CD4-positive, alpha-beta T cell (primary cell): ENCODE measurements at regions of chr2 and their contacts with region 1.

Region 1: DNA sequence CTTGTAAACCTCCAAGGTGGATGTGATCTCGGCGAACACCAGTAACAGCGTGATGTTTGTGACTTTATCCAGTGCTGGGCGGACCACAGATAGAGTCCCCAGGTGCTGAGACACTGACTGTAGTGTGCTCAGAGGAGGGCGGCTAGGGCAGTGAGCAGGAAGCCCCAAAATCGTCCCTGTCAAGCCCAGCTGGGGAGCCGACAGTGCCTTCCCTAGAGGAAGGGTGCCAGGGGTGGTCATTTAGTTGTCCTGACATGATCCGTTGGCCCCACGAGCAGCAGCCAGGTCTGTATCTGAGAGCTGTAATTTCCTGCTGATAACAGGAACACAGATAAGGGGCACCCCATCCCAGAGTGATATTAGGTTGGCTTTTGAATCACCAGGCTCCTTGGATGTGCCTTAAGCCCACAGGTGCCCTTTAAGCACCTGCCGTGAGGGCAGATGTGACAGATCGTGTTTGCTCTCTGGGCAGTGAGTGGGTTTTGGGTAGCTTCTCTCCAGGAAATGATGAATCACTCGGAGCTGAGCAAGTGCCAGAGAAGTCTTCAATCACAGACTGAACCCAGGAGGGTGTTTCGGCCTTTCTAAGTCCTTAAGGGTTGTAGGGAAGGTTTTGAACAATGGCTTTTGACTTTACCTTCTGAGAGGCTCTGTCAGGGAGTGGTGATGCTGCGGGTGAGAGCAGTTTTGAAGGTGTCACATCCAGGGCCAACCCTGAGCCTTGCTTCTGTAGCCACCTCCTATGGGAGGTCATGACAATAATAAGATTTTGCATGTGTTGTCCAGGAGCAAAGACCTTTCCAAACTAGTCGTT is 7.7 kb downstream of the LPIN1 start:
- DNase-seq: peak; percentile 44 to 86 (median 60)
- ATAC-seq: peak; percentile 47
- H3K4me3 ChIP-seq: peak overlapping the region; percentile 37
- H3K4me3 Mint-ChIP-seq: peak overlapping the region; percentile 80
- H3K27ac ChIP-seq: peak overlapping the region; percentile 80 to 94
- H3K27ac Mint-ChIP-seq: peak overlapping the region; percentile 92
- H3K4me1 ChIP-seq: peaks cover 71% of the 10 kb centered on the region
- H3K4me1 Mint-ChIP-seq: peaks cover 86% of the 10 kb centered on the region
- H3K27me3 ChIP-seq: no peaks in the 10 kb centered on the region
- H3K27me3 Mint-ChIP-seq: no peaks in the 10 kb centered on the region
- CTCF ChIP-seq: no peak

Region 2: GRCh38 chr2:11521775-11522174 is 232.3 kb before region 1 on chr2:
- CTCF ChIA-PET with region 1: no interaction called
- POLR2A ChIA-PET with region 1: no interaction called
- intact Hi-C with region 1: no loop called
- DNase-seq: no peak
- ATAC-seq: no peak
- H3K4me3 ChIP-seq: no peak overlapping the region
- H3K4me3 Mint-ChIP-seq: no peak overlapping the region
- H3K27ac ChIP-seq: no peak overlapping the region
- H3K27ac Mint-ChIP-seq: no peak overlapping the region
- H3K4me1 ChIP-seq: no peaks in the 10 kb centered on the region
- H3K4me1 Mint-ChIP-seq: no peaks in the 10 kb centered on the region
- H3K27me3 ChIP-seq: peaks cover 0 to 4% of the 10 kb centered on the region in 2 experiments
- H3K27me3 Mint-ChIP-seq: peaks cover 15% of the 10 kb centered on the region
- CTCF ChIP-seq: no peak

Region 3: DNA sequence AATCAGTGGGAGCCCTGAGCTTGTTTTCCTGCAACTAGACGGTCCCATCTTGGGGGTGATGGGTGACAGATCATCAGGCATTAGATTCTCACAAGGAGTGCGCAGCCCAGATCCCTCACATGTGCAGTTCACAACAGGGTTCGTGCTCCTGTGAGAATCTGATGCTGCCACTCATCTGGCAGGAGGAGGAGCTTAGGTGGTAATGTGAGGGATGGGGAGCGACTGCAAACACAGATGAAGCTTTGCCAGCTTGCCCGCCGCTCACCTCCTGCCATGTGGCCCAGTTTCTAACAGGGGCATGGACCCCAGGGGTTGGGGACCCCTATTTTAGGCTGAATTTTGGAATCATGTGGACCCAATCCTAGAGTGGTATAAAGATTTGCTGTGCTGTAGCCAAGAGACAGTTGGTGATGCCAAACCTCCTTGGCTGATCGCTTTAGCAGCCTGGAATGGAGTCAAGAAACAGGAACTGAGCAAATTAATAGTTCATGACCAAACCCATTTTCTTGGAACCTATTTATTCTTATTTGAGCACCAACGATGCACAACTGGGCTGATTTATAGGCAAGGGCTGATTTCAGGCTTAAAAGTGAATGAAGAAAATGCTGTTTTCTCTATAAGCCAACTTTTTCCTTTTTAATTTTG is 18.0 kb after region 1 on chr2:
- CTCF ChIA-PET with region 1: interaction called, 5 read pairs
- POLR2A ChIA-PET with region 1: interaction called, 8 read pairs
- intact Hi-C with region 1: loop called in 1 of 2 experiments (anchors 2 kb)
- DNase-seq: no peak
- ATAC-seq: no peak
- H3K4me3 ChIP-seq: no peak overlapping the region
- H3K4me3 Mint-ChIP-seq: no peak overlapping the region
- H3K27ac ChIP-seq: no peak overlapping the region
- H3K27ac Mint-ChIP-seq: no peak overlapping the region
- H3K4me1 ChIP-seq: peaks cover 16% of the 10 kb centered on the region
- H3K4me1 Mint-ChIP-seq: peaks cover 31% of the 10 kb centered on the region
- H3K27me3 ChIP-seq: no peaks in the 10 kb centered on the region
- H3K27me3 Mint-ChIP-seq: no peaks in the 10 kb centered on the region
- CTCF ChIP-seq: no peak